GM12878 (cell line): ENCODE measurements at regions of chrX and their contacts with region 1.

Region 1: GRCh38 chrX:129772796-129773431 is 6.8 kb upstream of the SASH3 start:
- DNase-seq: peak; percentile 91
- ATAC-seq: peak; percentile 84
- H3K4me3 ChIP-seq: no peak overlapping the region
- H3K27ac ChIP-seq: peak overlapping the region; percentile 86
- H3K4me1 ChIP-seq: peaks cover 70% of the 10 kb centered on the region
- H3K27me3 ChIP-seq: no peaks in the 10 kb centered on the region
- CTCF ChIP-seq: peak in 1 of 3 experiments; percentile 34; a peak in 1 of 6 replicates
- EP300 ChIP-seq: peak; percentile 34 to 65; a peak in 3 of 4 replicates
- POLR2A ChIP-seq: peak; percentile 66
- RAD21 ChIP-seq: peak; percentile 20; the same call in 1 of the 2 replicates

Region 2: GRCh38 chrX:129565046-129565650 is 207.8 kb before region 1 on chrX:
- CTCF ChIA-PET with region 1: no interaction called
- POLR2A ChIA-PET with region 1: no interaction called
- RAD21 ChIA-PET with region 1: no interaction called
- SMC1A ChIA-PET with region 1: no interaction called
- in situ Hi-C with region 1: no loop called
- intact Hi-C with region 1: no loop called
- DNase-seq: no peak
- ATAC-seq: no peak
- H3K4me3 ChIP-seq: no peak overlapping the region
- H3K27ac ChIP-seq: no peak overlapping the region
- H3K4me1 ChIP-seq: no peaks in the 10 kb centered on the region
- H3K27me3 ChIP-seq: no peaks in the 10 kb centered on the region
- CTCF ChIP-seq: no peak
- EP300 ChIP-seq: no peak
- POLR2A ChIP-seq: no peak
- RAD21 ChIP-seq: no peak

Region 3: GRCh38 chrX:129706400-129707072 is 66.4 kb before region 1 on chrX:
- CTCF ChIA-PET with region 1: no interaction called
- POLR2A ChIA-PET with region 1: no interaction called
- RAD21 ChIA-PET with region 1: no interaction called
- SMC1A ChIA-PET with region 1: no interaction called
- in situ Hi-C with region 1: no loop called
- intact Hi-C with region 1: no loop called
- DNase-seq: no peak
- ATAC-seq: no peak
- H3K4me3 ChIP-seq: no peak overlapping the region
- H3K27ac ChIP-seq: no peak overlapping the region
- H3K4me1 ChIP-seq: no peaks in the 10 kb centered on the region
- H3K27me3 ChIP-seq: no peaks in the 10 kb centered on the region
- CTCF ChIP-seq: no peak
- EP300 ChIP-seq: no peak
- POLR2A ChIP-seq: no peak
- RAD21 ChIP-seq: no peak

Region 4: DNA sequence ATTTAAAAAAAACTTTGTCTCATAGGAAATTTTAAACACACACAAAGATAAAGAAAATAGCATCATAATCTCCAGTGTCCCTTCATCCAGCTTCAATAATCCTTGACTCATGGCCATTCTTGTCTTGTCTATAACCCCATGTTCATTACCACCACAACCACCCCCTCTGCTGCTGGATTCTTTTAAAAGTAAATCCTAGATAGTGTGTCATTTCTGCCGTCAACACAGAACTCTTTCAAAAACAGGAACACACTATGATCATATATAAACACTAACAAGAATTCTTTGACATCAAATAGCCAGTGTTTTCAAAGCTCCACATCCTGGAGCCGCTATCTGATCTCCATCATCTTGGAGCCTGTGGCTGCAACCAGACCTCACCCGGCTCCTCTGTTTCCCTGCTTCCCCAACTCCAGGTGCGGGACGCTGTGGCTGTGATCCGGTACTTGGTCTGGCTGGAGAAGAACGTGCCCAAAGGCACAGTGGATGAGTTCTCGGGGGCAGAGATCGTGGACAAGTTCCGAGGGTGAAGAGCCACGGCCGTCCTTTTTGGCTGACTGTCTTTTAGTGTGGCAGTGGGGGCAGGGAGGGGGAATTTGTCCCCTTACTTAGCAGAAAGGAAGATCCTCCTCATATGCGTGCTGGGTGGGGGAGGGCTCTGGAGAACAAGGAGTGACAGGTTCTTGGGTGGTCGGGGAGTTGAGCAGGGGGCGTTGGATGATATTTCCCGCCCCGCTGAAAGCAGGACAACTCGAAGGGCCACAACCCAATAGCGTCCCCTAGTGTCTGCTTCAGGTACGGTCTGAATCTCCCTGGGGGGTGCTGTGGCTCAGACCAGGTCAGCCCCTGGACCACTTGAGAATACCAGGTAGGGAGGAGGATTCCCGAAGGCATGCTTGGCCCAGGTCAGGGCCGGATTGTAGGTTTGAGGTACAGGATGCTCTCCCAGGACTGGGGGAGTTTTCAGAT is 18.6 kb before region 1 on chrX:
- CTCF ChIA-PET with region 1: interaction called, 16 read pairs
- POLR2A ChIA-PET with region 1: interaction called, 14 read pairs
- RAD21 ChIA-PET with region 1: interaction called, 15 read pairs
- SMC1A ChIA-PET with region 1: interaction called, 57 read pairs
- in situ Hi-C with region 1: no loop called
- intact Hi-C with region 1: no loop called
- DNase-seq: no peak
- ATAC-seq: no peak
- H3K4me3 ChIP-seq: no peak overlapping the region
- H3K27ac ChIP-seq: no peak overlapping the region
- H3K4me1 ChIP-seq: peaks cover 19% of the 10 kb centered on the region
- H3K27me3 ChIP-seq: no peaks in the 10 kb centered on the region
- CTCF ChIP-seq: peak; percentile 31 to 60 (median 56); a peak in 5 of 6 replicates
- EP300 ChIP-seq: no peak
- POLR2A ChIP-seq: no peak
- RAD21 ChIP-seq: peak; percentile 59

Region 5: GRCh38 chrX:129759576-129760061 is 13.3 kb before region 1 on chrX:
- CTCF ChIA-PET with region 1: interaction called, 16 read pairs
- POLR2A ChIA-PET with region 1: interaction called, 14 read pairs
- RAD21 ChIA-PET with region 1: interaction called, 15 read pairs
- SMC1A ChIA-PET with region 1: interaction called, 57 read pairs
- in situ Hi-C with region 1: no loop called
- intact Hi-C with region 1: no loop called
- DNase-seq: no peak
- ATAC-seq: peak; percentile 61
- H3K4me3 ChIP-seq: no peak overlapping the region
- H3K27ac ChIP-seq: peak overlapping the region; percentile 38; the same call in 1 of the 2 replicates
- H3K4me1 ChIP-seq: peaks cover 29% of the 10 kb centered on the region
- H3K27me3 ChIP-seq: no peaks in the 10 kb centered on the region
- CTCF ChIP-seq: 0 out of 6 replicates have a peak, but pooled peaks of 1 of the 3 experiments have one; percentile 20
- EP300 ChIP-seq: no peak
- POLR2A ChIP-seq: no peak
- RAD21 ChIP-seq: peak; percentile 44; the same call in 1 of the 2 replicates

Region 6: DNA sequence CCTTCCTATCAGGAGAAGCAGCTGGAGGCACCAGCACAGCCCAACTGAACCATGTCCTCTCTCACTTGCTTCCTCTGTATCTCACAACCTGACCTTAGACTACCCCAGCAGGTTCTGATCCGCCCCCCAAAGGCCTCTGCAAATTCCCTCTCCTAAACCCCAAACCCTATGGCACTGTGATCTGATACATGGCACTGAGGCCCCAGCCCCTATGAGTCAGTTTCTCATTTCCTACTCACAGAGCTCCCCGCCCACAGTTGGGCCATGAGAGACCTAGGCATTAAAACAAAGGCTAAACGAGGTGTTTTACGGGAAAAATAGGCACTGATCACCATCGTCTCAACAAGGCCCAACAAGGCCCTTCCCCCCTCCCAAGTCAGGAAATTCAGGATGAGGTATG is 26.0 kb after region 1 on chrX:
- CTCF ChIA-PET with region 1: no interaction called
- POLR2A ChIA-PET with region 1: interaction called, 5 read pairs
- RAD21 ChIA-PET with region 1: no interaction called
- SMC1A ChIA-PET with region 1: interaction called, 10 read pairs
- in situ Hi-C with region 1: no loop called
- intact Hi-C with region 1: no loop called
- DNase-seq: no peak
- ATAC-seq: peak; percentile 38; the same call in 2 of the 3 replicates
- H3K4me3 ChIP-seq: no peak overlapping the region
- H3K27ac ChIP-seq: no peak overlapping the region
- H3K4me1 ChIP-seq: no peaks in the 10 kb centered on the region
- H3K27me3 ChIP-seq: no peaks in the 10 kb centered on the region
- CTCF ChIP-seq: no peak
- EP300 ChIP-seq: no peak
- POLR2A ChIP-seq: no peak
- RAD21 ChIP-seq: no peak

Region 7: DNA sequence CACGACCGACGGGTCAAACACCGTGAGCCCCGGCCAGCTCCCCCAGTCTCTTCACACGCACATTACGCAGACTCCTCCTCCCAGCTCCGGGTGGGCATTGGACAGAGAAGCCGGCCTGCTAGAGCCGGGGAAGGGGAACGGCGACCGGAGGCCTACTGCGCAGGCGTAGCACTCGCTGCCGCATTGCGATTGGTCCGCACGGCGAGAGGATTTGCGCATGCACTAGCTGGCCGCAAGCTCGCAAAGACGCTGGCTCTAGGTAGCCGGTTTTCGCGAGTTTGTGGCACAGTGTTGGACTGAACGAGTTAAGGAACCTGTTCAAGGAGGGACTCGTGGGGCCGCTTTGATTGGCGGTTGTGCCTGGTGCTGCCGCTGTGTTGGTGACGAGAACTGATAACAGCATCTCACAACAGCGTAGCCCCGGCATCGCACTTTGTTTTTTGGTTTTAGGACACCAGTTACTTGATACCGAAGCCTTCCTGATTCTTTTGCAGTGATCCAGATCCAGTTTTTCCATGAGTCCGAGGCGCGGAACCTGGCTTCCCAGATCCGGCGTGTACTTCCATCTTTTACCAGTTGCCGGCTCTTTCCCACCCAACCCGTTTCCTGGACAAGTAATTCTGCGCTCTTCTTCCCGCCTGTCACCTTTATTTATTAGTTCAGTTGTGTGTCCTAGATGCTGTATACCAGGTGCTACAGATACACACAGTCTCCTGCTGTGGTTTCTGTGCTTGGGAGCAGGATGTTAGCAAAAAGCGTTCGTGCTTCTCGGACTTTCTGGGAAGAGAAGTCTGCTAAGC is 393.0 kb after region 1 on chrX and contains the start of gene AIFM1:
- CTCF ChIA-PET with region 1: no interaction called
- POLR2A ChIA-PET with region 1: interaction called, 3 read pairs
- RAD21 ChIA-PET with region 1: no interaction called
- SMC1A ChIA-PET with region 1: no interaction called
- in situ Hi-C with region 1: no loop called
- intact Hi-C with region 1: loop called (anchors 10 kb)
- DNase-seq: peak; percentile 91
- ATAC-seq: peak; percentile 93
- H3K4me3 ChIP-seq: peak within 1 kb of the TSS; percentile 69
- H3K27ac ChIP-seq: peak within 1 kb of the TSS; percentile 70
- H3K4me1 ChIP-seq: peaks cover 4% of the 10 kb centered on the region; the same call in 1 of the 2 replicates
- H3K27me3 ChIP-seq: no peaks in the 10 kb centered on the region
- CTCF ChIP-seq: no peak
- EP300 ChIP-seq: no peak
- POLR2A ChIP-seq: peak; percentile 84
- RAD21 ChIP-seq: no peak
- polyA plus RNA-seq, gene AIFM1: 44.2 to 78.0 TPM